ENCODE measurements at regions of chr1 and their contacts with region 1.

Region 1: DNA sequence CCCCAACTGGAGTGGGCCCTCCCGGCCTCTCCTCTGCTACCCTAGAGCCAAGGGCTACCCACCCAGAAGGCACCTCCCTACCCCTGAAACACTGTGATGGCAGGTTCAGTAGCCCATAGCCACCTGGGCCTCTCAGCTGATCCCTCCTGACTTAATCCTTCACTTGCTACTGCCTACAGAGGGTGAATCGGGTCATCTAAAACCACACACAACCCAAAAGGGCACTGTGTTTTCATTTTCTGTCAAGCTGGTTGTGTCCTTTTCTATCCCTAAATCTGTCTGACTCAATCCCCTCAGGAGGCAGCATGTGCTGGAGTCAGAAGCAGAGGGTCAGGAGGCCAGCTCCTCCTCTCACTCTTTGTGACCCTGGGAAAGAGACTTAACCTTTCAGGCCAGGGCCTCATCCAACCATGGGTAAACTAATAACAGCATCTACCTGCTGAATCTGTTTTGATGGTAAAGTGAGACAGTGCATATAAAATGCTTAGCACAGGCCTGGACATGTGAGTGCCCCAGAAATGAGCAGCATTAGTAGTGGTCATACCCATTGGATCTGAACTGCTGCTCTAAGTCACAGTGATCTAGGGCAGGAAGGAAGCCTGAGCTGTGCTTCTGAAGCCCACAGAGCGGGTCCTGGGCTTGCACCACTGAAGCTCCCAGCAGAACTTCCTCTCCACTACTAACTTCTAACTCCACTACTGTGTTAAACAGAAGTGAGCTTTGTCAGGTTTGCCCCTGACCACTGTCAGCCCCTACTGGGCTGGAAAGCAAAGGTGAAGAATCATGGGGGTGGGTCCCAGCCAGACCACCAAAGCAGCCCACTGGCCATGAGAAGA is 11.0 kb downstream of the PMVK start:
- DNase-seq: no peak
- H3K4me3 Mint-ChIP-seq: no peak overlapping the region
- H3K27ac Mint-ChIP-seq: no peak overlapping the region
- H3K4me1 Mint-ChIP-seq: no peaks in the 10 kb centered on the region
- H3K27me3 Mint-ChIP-seq: no peaks in the 10 kb centered on the region
- CTCF ChIP-seq: no peak

Region 2: GRCh38 chr1:154906621-154907081 is 18.9 kb before region 1 on chr1:
- CTCF ChIA-PET with region 1: interaction called, 14 read pairs
- POLR2A ChIA-PET with region 1: interaction called, 3 read pairs
- intact Hi-C with region 1: no loop called
- DNase-seq: peak; percentile 57
- H3K4me3 Mint-ChIP-seq: no peak overlapping the region
- H3K27ac Mint-ChIP-seq: no peak overlapping the region
- H3K4me1 Mint-ChIP-seq: no peaks in the 10 kb centered on the region
- H3K27me3 Mint-ChIP-seq: no peaks in the 10 kb centered on the region
- CTCF ChIP-seq: peak; percentile 45

Region 3: DNA sequence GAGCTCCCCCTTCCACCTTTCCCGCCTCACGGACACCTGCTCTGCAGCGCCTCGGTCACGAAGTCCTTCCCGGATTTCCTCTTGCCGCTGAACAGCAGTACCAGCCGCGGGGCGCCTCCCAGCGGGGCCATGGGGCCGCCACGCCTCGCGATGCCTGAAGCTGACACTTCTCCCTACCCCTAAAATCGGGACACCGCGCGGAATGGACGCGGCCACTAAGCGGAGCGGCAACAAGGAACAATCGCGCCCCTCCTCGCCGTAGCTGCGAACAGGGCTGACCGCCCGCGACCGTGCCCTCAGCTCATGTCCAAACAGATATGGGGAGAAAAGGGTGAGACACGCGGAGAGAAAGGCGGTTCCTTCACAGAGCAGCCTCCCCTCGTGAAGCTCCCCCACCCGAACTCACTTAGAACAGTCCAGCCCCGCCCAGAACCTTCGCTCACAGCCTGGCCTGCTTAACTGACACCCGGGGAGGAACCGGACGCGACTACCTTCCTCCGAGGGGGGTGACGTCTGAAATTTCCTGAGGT is 11.1 kb after region 1 on chr1 and contains the start of gene PMVK:
- CTCF ChIA-PET with region 1: interaction called, 13 read pairs
- POLR2A ChIA-PET with region 1: interaction called, 20 read pairs
- intact Hi-C with region 1: no loop called
- DNase-seq: peak; percentile 99
- H3K4me3 Mint-ChIP-seq: peak within 1 kb of the TSS; percentile 90
- H3K27ac Mint-ChIP-seq: peak within 1 kb of the TSS; percentile 100
- H3K4me1 Mint-ChIP-seq: peaks cover 49% of the 10 kb centered on the region
- H3K27me3 Mint-ChIP-seq: no peaks in the 10 kb centered on the region
- CTCF ChIP-seq: peak; percentile 26
- total RNA-seq, gene PMVK: 57.7 and 68.9 TPM in 2 replicates

Region 4: GRCh38 chr1:154943649-154944400 is 18.3 kb after region 1 on chr1:
- CTCF ChIA-PET with region 1: interaction called, 14 read pairs
- POLR2A ChIA-PET with region 1: no interaction called
- intact Hi-C with region 1: no loop called
- DNase-seq: peak; percentile 66
- H3K4me3 Mint-ChIP-seq: no peak overlapping the region
- H3K27ac Mint-ChIP-seq: no peak overlapping the region
- H3K4me1 Mint-ChIP-seq: peaks cover 12% of the 10 kb centered on the region
- H3K27me3 Mint-ChIP-seq: no peaks in the 10 kb centered on the region
- CTCF ChIP-seq: peak; percentile 91

Measured in MCF 10A (cell line).